Cardiac septum (tissue), 1 donor: ENCODE measurements at regions of chr7 and their contacts with region 1.

Region 1: GRCh38 chr7:80699045-80699638 is 60.7 kb downstream of the CD36 start:
- DNase-seq: no peak

Region 2: GRCh38 chr7:80095545-80095944 is 603.6 kb before region 1 on chr7:
- intact Hi-C with region 1: no loop called
- DNase-seq: no peak

Region 3: GRCh38 chr7:80634505-80634904 is 64.6 kb before region 1 on chr7:
- intact Hi-C with region 1: no loop called
- DNase-seq: no peak

Region 4: GRCh38 chr7:81264116-81264515 is 565.0 kb after region 1 on chr7:
- intact Hi-C with region 1: loop called (anchors 5 kb)
- DNase-seq: no peak

Region 5: GRCh38 chr7:81469869-81470723 is 771.0 kb after region 1 on chr7:
- intact Hi-C with region 1: loop called (anchors 2 kb)
- DNase-seq: peak; percentile 82